Ascending aorta (tissue), 2 donors: ENCODE measurements at regions of chr3 and their contacts with region 1.

Region 1: GRCh38 chr3:52056968-52057805 is 816 bp upstream of the DUSP7 start:
- DNase-seq: peak; percentile 99 to 100
- H3K4me3 ChIP-seq: peak overlapping the region; percentile 69 to 95
- H3K27ac ChIP-seq: peak overlapping the region; percentile 93 to 94
- H3K4me1 ChIP-seq: peaks cover 19 to 33% of the 10 kb centered on the region in 2 donors
- H3K27me3 ChIP-seq: no peaks in the 10 kb centered on the region
- CTCF ChIP-seq: peak in 1 of 3 experiments; percentile 19

Region 2: DNA sequence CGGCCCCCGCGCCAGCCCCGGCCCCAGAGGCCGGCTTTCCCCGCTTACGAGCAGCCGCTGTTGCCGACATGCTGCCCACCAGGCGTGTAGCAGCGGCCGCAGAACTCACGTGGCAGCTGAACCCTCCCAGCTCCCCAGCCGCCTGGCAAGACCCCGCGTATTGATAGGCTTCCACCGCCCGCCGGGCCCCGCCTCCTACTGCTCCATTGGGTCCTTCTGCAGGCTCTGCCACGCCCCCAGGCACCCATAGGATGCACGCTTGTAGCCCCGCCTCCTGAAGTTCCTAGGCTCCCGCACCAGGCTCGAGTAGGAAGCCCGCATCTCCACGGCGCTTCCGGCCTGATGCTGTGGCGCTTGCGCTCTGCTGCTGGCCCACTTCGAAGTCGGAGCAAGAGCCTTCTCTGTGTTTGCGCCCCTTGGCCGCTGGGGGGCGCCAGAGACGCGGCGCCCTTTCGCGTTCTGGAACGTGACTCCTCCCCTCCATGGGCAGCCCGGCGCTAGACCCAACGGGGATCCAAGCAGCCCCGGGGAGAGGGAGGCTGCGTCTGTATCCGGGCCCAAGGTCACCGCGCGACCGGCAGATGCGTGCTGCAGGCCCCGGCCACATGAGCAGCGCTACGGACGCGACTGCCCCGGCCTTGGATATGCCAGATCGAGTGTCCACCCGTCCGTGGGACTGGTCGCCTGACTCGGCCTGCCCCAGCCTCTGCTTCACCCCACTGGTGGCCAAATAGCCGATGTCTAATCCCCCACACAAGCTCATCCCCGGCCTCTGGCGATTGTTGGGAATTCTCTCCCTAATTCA is 115.2 kb before region 1 on chr3 and contains the starts of genes PARP3 and RRP9:
- intact Hi-C with region 1: loop called (anchors 2 kb)
- DNase-seq: peak; percentile 100
- H3K4me3 ChIP-seq: peak within 1 kb of the TSS; percentile 77 to 91
- H3K27ac ChIP-seq: peak within 1 kb of the TSS; percentile 97 to 98
- H3K4me1 ChIP-seq: peaks cover 14 to 23% of the 10 kb centered on the region in 2 donors
- H3K27me3 ChIP-seq: no peaks in the 10 kb centered on the region
- CTCF ChIP-seq: peak; percentile 99
- total RNA-seq, gene PARP3: 29.5 TPM
- total RNA-seq, gene RRP9: 15.4 TPM

Region 3: DNA sequence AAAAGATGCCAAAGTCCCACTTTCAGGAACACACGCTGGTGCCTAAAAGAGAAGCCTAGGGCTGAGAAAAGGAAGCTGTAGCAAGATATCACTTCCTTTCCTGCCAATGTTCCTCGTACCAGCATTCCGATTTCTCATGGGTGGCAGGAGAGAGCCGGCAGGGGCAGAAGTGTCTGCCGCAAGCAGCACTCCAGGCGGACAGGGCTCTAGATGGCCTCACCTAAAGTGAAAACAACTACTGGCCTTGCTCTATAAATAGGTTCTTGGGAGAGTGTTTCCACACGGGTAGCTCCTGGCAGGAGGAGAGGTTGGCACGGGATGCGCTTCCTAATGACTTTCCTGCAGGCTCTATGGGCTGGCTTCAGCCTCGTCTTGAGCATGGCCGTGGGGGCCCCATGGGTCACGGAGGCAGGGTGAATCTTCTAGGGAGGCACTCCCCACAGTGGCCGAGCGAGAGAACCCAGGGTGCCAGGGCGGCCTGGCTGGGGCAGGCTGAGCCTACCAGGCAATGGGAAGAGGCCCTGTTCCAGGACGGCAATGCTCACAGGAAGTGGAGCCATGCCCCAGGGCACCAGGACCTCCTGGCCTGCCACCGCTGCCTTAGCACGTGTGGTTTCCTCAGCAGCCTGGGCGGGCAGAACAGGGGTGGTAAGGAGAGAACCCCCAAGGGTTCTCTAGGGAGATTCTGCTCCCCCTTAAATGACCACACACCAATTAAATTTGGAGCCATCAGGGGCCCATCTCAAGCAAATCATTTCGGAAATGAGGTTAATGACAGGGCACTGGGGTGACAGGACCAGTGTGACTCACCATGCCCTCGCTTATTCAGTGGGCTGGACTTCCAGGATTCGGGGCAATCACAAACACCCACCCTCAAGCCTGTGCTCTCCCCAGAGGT is 13.8 kb after region 1 on chr3:
- intact Hi-C with region 1: loop called (anchors 1 kb)
- DNase-seq: peak in 1 of 2 donors; percentile 89
- H3K4me3 ChIP-seq: no peak overlapping the region
- H3K27ac ChIP-seq: peak overlapping the region; percentile 84 to 95
- H3K4me1 ChIP-seq: peaks cover 3 to 23% of the 10 kb centered on the region in 2 donors
- H3K27me3 ChIP-seq: no peaks in the 10 kb centered on the region
- CTCF ChIP-seq: peak; percentile 5 to 43 (median 8)

Region 4: DNA sequence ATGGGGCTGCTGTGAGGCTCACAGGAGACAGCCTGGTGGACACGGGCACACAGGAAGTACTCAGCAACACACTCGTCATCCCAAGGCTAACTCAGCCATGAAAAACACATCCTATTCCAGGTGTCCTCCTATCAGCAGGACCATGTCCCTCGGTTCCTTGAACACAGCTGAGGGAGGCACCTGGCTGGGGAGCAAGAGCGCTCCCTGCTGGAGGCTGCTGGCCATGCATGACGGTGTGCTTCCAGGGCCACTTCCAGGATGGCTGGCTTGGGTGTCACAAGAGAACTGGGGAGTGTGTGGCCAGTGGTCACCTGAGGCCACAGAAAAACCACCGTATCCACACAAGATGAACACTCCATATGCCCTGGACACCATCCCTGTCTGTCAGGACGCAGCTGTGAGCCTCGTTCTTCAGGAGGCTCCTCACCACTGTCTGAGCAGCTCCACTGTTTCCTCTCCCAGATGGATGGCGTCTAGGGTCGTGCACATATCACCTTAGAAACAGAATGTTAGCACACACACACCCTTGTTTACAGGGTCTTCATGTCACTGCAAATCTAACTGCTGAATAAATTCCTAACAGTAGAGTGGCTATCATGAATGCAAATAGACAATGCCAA is 66.0 kb after region 1 on chr3:
- intact Hi-C with region 1: loop called (anchors 1 kb)
- DNase-seq: peak in 1 of 2 donors; percentile 89
- H3K4me3 ChIP-seq: no peak overlapping the region
- H3K27ac ChIP-seq: no peak overlapping the region
- H3K4me1 ChIP-seq: peaks cover 0 to 6% of the 10 kb centered on the region in 2 donors
- H3K27me3 ChIP-seq: no peaks in the 10 kb centered on the region
- CTCF ChIP-seq: peak; percentile 90 to 98 (median 97)

Region 5: GRCh38 chr3:52154117-52155094 is 97.2 kb after region 1 on chr3 and contains the start of gene POC1A:
- intact Hi-C with region 1: loop called (anchors 1 kb)
- DNase-seq: peak; percentile 88 to 99
- H3K4me3 ChIP-seq: peak within 1 kb of the TSS; percentile 72 to 91
- H3K27ac ChIP-seq: peak within 1 kb of the TSS; percentile 88 to 92
- H3K4me1 ChIP-seq: peaks cover 6 to 11% of the 10 kb centered on the region in 2 donors
- H3K27me3 ChIP-seq: no peaks in the 10 kb centered on the region
- CTCF ChIP-seq: peak in 2 of 3 experiments; percentile 10 to 13
- total RNA-seq, gene POC1A: not detected

Region 6: DNA sequence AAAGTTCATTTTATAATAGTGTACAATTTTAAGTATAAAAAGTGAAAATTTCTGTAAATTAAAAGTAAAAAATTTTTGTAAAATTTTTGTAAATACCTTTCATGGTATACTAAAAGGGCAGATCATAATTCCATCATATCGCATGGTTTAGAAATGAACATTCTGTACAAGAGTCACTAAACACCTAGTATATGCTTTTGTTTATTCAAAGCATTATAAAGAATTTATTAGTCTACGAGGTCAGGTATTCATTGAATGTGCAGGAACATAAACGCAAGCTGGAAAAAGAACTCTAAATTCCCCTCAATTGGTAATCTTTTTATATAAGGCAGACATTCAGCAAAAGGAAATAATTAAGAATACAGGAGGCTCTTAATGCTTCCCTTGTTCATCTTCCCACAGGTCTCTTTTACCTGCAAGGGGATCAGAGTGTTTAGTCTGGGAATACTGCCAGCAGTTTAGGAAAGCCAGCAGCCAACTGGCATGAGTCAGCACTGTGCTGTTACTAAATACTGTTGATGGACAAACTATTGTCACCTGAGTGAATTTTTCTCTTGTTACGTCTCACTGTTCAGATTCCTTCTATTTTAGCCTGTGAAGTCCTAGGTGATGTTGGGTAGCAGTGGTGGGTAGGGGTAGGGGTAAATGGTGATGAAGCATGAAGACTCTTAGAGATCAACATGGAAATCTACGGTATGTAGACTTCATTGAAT is 549.3 kb after region 1 on chr3:
- intact Hi-C with region 1: no loop called
- DNase-seq: no peak
- H3K4me3 ChIP-seq: no peak overlapping the region
- H3K27ac ChIP-seq: no peak overlapping the region
- H3K4me1 ChIP-seq: no peaks in the 10 kb centered on the region
- H3K27me3 ChIP-seq: no peaks in the 10 kb centered on the region
- CTCF ChIP-seq: no peak